Mammary epithelial cell (primary cell): ENCODE measurements at regions of chr6 and their contacts with region 1.

Region 1: DNA sequence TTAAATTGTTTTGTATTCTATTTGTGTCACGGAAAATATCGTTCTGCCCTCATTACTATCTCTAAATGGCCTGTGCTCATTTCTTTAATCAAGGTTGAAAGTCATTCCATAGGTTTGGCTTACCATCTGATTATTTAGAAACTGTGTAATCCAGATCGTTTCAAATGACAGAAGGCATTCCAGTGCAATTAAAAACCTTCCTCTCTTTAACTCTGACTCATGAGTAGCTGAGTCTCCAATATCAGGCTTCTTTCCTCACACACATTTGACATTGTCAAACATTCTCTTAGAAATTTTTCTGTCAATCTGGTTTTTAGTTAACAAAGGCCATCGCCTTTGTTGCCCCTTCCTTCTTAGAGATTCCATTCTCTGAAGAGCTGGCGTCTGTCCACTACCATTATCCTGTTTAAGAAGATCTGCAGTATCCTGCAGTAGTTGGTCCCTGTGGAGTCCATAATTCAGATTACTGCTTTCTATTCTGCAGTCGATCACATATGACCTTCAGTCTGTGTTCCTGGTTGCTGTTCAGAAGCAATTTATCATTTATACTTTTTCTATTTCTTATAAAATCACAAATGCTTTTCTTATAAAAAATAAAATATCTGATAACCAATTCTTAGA is 3.9 kb upstream of the TRDN start:
- DNase-seq: no peak
- H3K4me3 ChIP-seq: no peak overlapping the region
- H3K27ac ChIP-seq: no peak overlapping the region
- H3K4me1 ChIP-seq: no peaks in the 10 kb centered on the region
- H3K27me3 ChIP-seq: peaks cover 5% of the 10 kb centered on the region
- CTCF ChIP-seq: no peak

Region 2: DNA sequence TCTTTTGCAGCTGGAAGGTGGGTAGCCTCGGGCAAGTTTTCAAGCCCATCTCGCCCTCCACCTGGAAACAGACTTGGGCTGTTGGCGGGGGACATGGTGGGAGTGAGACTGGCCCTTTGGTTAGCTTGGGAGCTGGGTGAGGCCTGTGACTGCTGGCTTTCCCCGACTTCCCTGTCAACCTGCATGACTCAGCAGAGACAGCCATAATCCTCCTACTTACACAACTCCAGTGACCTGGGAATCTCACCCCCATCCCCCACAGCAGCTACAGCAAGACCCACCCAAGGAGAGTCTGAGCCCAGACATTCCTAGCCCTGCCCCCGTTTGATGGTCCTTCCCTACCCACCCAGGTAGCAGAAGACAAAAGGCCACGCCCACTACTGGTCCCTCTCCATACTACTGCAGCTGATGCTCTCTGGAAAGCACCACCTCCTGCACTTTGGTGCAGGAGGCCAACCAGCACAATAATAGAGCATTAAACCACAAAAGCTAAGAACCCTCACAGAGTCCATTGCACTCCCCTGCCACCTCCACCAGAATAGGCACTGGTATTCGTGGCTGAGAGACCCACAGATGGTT is 192.3 kb before region 1 on chr6:
- CTCF ChIA-PET with region 1: no interaction called
- dilution Hi-C with region 1: no loop called
- in situ Hi-C with region 1: no loop called
- intact Hi-C with region 1: no loop called
- DNase-seq: no peak
- H3K4me3 ChIP-seq: no peak overlapping the region
- H3K27ac ChIP-seq: no peak overlapping the region
- H3K4me1 ChIP-seq: no peaks in the 10 kb centered on the region
- H3K27me3 ChIP-seq: no peaks in the 10 kb centered on the region
- CTCF ChIP-seq: no peak

Region 3: GRCh38 chr6:123598011-123598410 is 42.7 kb before region 1 on chr6:
- CTCF ChIA-PET with region 1: no interaction called
- dilution Hi-C with region 1: no loop called
- in situ Hi-C with region 1: no loop called
- intact Hi-C with region 1: no loop called
- DNase-seq: no peak
- H3K4me3 ChIP-seq: no peak overlapping the region
- H3K27ac ChIP-seq: no peak overlapping the region
- H3K4me1 ChIP-seq: no peaks in the 10 kb centered on the region
- H3K27me3 ChIP-seq: no peaks in the 10 kb centered on the region
- CTCF ChIP-seq: no peak

Region 4: DNA sequence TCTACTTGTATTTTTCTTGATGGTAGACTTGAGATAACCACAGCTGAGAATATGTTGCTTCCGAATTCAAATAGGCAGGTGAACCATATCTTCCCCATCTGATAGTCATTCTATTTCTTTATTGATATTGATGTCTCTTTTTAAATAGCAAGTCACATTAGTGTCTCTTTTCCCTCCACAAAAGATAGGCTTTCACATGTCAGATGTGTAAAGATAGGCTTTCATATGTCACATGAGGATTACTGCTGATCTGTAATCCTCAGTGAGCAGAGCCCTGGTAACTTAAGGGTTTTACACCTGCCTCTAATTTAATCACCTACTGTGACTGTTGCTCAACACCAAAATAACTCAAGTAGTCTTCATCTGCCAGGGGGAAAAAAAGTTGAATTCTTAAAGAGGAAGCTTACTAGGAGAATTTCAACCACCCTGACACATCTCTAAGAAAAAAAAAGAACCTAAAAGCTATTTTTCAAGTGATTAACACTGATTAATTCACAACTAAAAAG is 41.3 kb after region 1 on chr6:
- CTCF ChIA-PET with region 1: no interaction called
- dilution Hi-C with region 1: no loop called
- in situ Hi-C with region 1: no loop called
- intact Hi-C with region 1: loop called (anchors 5 kb)
- DNase-seq: no peak
- H3K4me3 ChIP-seq: no peak overlapping the region
- H3K27ac ChIP-seq: no peak overlapping the region
- H3K4me1 ChIP-seq: no peaks in the 10 kb centered on the region
- H3K27me3 ChIP-seq: no peaks in the 10 kb centered on the region
- CTCF ChIP-seq: no peak